HEK293 (cell line): ENCODE measurements at regions of chr11 and their contacts with region 1.

Region 1: GRCh38 chr11:123707606-123708205 is 33.8 kb downstream of the ZNF202 start:
- H3K4me3 ChIP-seq: no peak overlapping the region
- H3K27ac ChIP-seq: no peak overlapping the region
- H3K4me1 ChIP-seq: no peaks in the 10 kb centered on the region
- CTCF ChIP-seq: peak; percentile 9; the same call in 1 of the 2 replicates

Region 2: DNA sequence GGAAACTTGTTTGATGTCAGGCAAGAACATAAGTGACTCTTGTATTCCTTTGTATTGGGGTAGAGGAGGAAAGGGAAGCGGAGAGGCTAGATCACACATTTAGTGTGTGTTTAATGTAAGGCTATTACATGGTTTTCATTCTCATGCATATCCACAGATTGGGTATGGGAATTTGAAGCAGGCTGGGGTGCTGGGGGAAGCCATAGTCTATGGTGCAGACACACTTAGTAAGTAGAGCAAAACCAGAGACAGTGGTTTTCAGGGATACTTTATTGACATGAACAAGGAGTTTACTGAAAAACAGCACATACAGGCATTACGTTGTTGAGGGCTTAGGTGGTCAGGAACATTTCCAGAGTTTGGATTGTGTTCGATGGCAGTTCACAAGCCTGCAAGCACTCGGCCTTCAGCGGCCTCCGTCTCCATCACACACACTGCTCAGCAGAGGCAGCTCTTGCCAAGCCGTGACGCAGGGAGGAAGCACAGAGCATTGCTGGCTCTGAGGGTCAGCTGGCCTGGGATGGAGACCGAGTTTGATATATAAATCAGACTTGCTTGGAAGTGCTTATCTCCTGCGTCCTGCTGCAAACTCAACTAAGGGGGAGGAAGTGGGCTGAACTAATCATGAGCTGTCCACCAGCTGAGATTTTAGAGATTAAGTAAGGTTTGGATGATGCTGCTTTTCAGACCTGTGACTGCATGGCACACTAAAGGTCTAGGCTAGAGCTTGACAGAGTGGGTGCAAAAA is 78.6 kb before region 1 on chr11:
- CTCF ChIA-PET with region 1: interaction called, 310 read pairs
- POLR2A ChIA-PET with region 1: no interaction called
- H3K4me3 ChIP-seq: no peak overlapping the region
- H3K27ac ChIP-seq: no peak overlapping the region
- H3K4me1 ChIP-seq: no peaks in the 10 kb centered on the region
- CTCF ChIP-seq: no peak

Region 3: DNA sequence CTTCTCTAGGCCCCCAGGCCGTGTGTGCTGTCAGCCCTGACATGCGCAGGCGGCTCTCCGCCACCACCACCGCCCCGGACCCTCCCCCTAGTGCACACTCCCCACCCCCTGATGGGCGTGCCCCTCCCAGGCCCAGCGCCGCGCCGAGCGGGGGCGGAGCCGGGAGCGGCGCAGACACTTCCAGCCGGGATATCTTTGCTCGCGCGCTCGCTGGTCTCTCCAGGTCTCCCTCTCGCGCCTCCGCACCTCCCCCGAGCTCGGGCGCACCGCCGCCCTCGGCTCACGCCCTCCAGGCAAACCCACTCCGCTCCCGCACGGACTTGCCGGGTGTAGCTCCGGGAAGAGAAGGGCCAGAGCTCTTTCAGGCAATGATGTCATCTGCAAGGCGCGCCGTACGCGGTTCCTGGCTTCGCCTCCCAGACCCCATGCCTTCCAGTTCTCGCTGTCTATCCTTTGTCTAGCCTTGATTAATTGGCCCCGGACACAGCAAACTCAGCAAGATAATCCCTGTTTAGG is 53.1 kb before region 1 on chr11 and contains the start of gene SCN3B:
- CTCF ChIA-PET with region 1: interaction called, 69 read pairs
- POLR2A ChIA-PET with region 1: interaction called, 3 read pairs
- H3K4me3 ChIP-seq: peak within 1 kb of the TSS; percentile 61
- H3K27ac ChIP-seq: 0 out of 2 replicates have a peak within 1 kb of the TSS, but pooled peaks have one; percentile 5
- H3K4me1 ChIP-seq: no peaks in the 10 kb centered on the region
- CTCF ChIP-seq: no peak

Region 4: DNA sequence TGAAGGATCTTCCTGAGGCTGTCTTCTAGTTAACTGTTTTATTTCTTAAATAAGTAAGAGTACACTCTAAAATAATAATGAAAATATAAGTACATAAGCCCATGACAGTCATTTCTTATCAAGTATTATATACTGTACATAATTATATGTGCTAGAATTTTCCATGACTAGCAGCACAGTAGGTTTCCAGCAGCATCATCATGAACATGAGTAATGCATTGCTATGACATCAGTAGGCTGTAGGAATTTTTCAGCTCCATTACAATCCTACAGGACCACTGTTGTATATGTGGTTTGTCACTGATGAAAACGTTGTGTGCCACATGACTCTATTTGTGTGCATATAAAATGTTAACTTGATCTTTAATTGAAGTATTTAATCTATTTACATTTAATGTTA is 11.7 kb after region 1 on chr11:
- CTCF ChIA-PET with region 1: interaction called, 23 read pairs
- POLR2A ChIA-PET with region 1: no interaction called
- H3K4me3 ChIP-seq: no peak overlapping the region
- H3K27ac ChIP-seq: no peak overlapping the region
- H3K4me1 ChIP-seq: no peaks in the 10 kb centered on the region
- CTCF ChIP-seq: no peak

Region 5: DNA sequence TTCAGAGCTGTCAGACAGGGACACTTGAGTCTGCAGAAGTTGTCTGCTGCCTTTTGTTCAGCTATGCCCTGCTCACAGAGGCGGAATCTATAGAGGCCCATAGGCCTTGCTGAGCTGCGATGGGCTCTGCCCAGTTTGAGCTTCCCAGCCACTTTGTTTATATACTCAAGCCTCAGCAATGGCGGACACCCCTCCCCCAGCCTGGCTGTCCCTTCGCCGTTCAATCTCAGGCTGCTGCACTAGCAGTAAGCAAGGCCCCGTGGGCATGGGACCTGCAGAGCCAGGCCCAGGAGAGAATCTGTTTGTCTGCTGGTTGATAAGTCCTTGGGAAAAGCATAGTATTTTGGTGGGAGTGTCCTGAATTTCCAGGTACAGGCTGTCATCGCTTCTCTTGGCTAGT is 122.0 kb after region 1 on chr11:
- CTCF ChIA-PET with region 1: no interaction called
- POLR2A ChIA-PET with region 1: no interaction called
- H3K4me3 ChIP-seq: no peak overlapping the region
- H3K27ac ChIP-seq: no peak overlapping the region
- H3K4me1 ChIP-seq: no peaks in the 10 kb centered on the region
- CTCF ChIP-seq: no peak